ENCODE measurements at regions of chr5 and their contacts with region 1.

Region 1: DNA sequence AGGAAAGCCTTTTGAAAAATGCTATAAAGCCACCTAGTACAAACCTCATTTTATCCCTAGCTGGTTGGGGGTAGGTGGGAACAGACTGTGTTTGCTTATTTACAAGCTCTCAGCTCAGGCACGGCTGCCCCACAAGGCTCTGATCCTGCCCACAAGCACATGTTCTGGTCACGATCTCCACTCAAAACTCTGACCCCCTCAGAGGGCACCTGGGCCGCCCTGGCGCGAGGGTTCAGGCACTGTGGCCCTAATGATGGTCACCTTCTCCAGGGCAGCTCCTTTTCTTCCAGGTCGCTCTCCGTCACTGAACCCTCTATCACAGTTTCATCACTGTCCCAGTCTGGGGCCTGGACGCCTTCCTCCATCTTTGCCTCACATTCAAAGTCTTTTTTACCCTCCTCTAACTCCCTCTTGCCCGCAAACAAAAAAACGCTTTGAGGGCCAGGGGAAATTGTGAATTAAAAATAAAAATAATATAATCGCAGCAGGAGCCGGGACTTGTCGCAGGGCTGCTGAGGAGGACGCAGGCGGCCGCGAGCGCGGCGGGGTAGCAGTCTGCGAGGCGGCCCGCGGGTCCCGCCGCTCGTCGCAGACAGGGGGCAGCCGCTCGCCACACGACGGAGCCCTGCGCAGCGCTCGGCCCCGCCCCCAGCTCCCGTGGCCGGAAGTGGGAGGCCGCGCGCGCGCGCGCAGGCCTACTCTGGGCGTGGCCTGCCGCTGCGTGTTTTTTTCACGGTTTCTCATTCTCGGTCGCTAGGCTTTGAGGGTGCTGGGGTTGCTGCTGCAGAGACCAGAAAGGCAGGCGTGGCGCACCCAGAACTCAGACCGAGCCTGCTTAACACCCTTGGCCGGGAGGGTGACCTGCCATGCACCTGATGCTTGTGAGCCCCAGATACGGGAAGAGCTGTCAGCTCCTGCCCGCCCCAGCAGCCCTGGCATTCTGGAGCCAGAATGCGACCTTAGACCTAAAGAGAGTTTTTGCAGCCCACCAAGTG is at the start of gene ANKRD31:
- DNase-seq: peak; percentile 80 to 97 (median 90)
- ATAC-seq: peak; percentile 98
- H3K4me3 ChIP-seq: peak within 1 kb of the TSS; percentile 76
- H3K4me3 Mint-ChIP-seq: peak within 1 kb of the TSS; percentile 96
- H3K27ac ChIP-seq: peak within 1 kb of the TSS; percentile 58 to 79
- H3K27ac Mint-ChIP-seq: peak within 1 kb of the TSS; percentile 94
- H3K4me1 ChIP-seq: peaks cover 13% of the 10 kb centered on the region
- H3K4me1 Mint-ChIP-seq: peaks cover 19% of the 10 kb centered on the region
- H3K27me3 ChIP-seq: no peaks in the 10 kb centered on the region
- H3K27me3 Mint-ChIP-seq: no peaks in the 10 kb centered on the region
- CTCF ChIP-seq: peak; percentile 80
- total RNA-seq, gene ANKRD31: 0.55 to 0.56 TPM

Region 2: DNA sequence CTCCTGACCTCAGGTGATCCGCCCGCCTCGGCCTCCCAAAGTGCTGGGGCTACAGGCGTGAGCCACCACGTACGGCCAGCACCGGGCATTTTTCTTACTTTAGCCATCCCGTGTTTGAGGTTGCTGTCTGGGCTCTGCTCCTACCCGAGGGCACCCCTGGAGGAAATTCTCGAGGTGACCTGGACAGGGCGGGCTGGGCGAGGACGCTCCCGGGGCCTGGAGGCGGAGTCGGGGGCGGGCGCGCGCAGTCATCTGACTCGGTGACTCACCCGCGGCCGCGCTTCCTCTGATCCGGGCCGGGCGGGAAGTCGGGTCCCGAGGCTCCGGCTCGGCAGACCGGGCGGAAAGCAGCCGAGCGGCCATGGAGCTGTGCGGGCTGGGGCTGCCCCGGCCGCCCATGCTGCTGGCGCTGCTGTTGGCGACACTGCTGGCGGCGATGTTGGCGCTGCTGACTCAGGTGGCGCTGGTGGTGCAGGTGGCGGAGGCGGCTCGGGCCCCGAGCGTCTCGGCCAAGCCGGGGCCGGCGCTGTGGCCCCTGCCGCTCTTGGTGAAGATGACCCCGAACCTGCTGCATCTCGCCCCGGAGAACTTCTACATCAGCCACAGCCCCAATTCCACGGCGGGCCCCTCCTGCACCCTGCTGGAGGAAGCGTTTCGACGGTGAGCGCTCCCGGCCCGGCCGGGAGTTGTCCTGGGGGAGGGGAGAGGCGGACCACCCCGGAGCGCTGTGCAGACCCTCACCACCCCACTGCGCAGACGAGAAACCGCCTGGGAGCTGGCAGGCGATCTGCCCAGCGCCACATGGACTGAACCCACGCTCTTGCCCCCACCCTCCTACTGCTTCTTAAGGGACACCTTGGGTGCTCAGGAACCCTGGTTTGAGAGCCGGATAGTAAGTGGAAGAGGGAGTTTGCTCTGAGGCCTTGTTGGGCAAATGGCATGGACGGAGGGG is 551.4 kb before region 1 on chr5 and contains the start of gene HEXB:
- CTCF ChIA-PET with region 1: no interaction called
- POLR2A ChIA-PET with region 1: no interaction called
- intact Hi-C with region 1: loop called in 1 of 2 experiments (anchors 10 kb)
- DNase-seq: peak; percentile 61 to 92 (median 82)
- ATAC-seq: peak; percentile 88
- H3K4me3 ChIP-seq: peak within 1 kb of the TSS; percentile 99
- H3K4me3 Mint-ChIP-seq: peak within 1 kb of the TSS; percentile 92
- H3K27ac ChIP-seq: peak within 1 kb of the TSS; percentile 52 to 63
- H3K27ac Mint-ChIP-seq: peak within 1 kb of the TSS; percentile 72
- H3K4me1 ChIP-seq: peaks cover 27% of the 10 kb centered on the region
- H3K4me1 Mint-ChIP-seq: peaks cover 22% of the 10 kb centered on the region
- H3K27me3 ChIP-seq: no peaks in the 10 kb centered on the region
- H3K27me3 Mint-ChIP-seq: no peaks in the 10 kb centered on the region
- CTCF ChIP-seq: no peak
- total RNA-seq, gene HEXB: 31.9 to 33.8 TPM

Region 3: GRCh38 chr5:75059912-75060545 is 176.6 kb before region 1 on chr5:
- CTCF ChIA-PET with region 1: interaction called, 10 read pairs
- POLR2A ChIA-PET with region 1: interaction called, 182 read pairs
- intact Hi-C with region 1: no loop called
- DNase-seq: peak in 13 of 14 experiments; percentile 24 to 88 (median 43)
- ATAC-seq: peak; percentile 92
- H3K4me3 ChIP-seq: no peak overlapping the region
- H3K4me3 Mint-ChIP-seq: peak overlapping the region; percentile 70
- H3K27ac ChIP-seq: peak overlapping the region; percentile 59 to 81
- H3K27ac Mint-ChIP-seq: peak overlapping the region; percentile 94
- H3K4me1 ChIP-seq: peaks cover 69% of the 10 kb centered on the region
- H3K4me1 Mint-ChIP-seq: peaks cover 73% of the 10 kb centered on the region
- H3K27me3 ChIP-seq: no peaks in the 10 kb centered on the region
- H3K27me3 Mint-ChIP-seq: no peaks in the 10 kb centered on the region
- CTCF ChIP-seq: no peak

Region 4: GRCh38 chr5:75192804-75193203 is 43.8 kb before region 1 on chr5:
- CTCF ChIA-PET with region 1: no interaction called
- POLR2A ChIA-PET with region 1: no interaction called
- intact Hi-C with region 1: no loop called
- DNase-seq: no peak
- ATAC-seq: no peak
- H3K4me3 ChIP-seq: no peak overlapping the region
- H3K4me3 Mint-ChIP-seq: no peak overlapping the region
- H3K27ac ChIP-seq: no peak overlapping the region
- H3K27ac Mint-ChIP-seq: no peak overlapping the region
- H3K4me1 ChIP-seq: no peaks in the 10 kb centered on the region
- H3K4me1 Mint-ChIP-seq: no peaks in the 10 kb centered on the region
- H3K27me3 ChIP-seq: no peaks in the 10 kb centered on the region
- H3K27me3 Mint-ChIP-seq: no peaks in the 10 kb centered on the region
- CTCF ChIP-seq: no peak

Region 5: GRCh38 chr5:75277463-75277862 is 40.8 kb after region 1 on chr5:
- CTCF ChIA-PET with region 1: no interaction called
- POLR2A ChIA-PET with region 1: no interaction called
- intact Hi-C with region 1: no loop called
- DNase-seq: no peak
- ATAC-seq: no peak
- H3K4me3 ChIP-seq: no peak overlapping the region
- H3K4me3 Mint-ChIP-seq: no peak overlapping the region
- H3K27ac ChIP-seq: no peak overlapping the region
- H3K27ac Mint-ChIP-seq: no peak overlapping the region
- H3K4me1 ChIP-seq: no peaks in the 10 kb centered on the region
- H3K4me1 Mint-ChIP-seq: peaks cover 4% of the 10 kb centered on the region
- H3K27me3 ChIP-seq: no peaks in the 10 kb centered on the region
- H3K27me3 Mint-ChIP-seq: no peaks in the 10 kb centered on the region
- CTCF ChIP-seq: no peak

Region 6: DNA sequence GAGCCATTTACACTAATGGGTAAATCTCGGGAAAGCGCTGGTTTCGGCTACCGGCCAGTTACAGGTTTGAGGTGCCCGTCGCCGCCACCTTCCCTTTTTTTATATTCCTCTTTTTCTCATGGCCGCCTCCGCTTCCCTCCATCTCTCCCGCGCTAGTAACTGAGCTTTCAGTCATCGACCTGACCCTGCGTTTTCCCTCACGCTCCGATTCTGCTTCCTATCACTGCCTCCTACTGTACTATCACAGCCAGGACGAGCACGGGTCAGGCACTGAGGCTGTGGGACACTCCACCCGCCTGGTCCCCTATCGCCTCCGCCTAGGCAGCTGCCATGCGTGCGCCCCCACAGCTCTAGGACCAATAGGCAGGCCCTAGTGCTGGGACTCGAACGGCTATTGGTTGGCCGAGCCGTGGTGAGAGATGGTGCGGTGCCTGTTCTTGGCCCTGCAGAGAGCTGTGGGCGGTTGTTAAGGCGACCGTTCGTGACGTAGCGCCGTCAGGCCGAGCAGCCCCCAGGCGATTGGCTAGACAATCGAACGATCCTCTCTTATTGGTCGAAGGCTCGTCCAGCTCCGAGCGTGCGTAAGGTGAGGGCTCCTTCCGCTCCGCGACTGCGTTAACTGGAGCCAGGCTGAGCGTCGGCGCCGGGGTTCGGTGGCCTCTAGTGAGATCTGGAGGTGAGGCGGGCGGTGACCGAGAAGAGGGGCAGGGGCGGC is 100.2 kb after region 1 on chr5 and contains the start of gene HMGCR:
- CTCF ChIA-PET with region 1: interaction called, 14 read pairs
- POLR2A ChIA-PET with region 1: interaction called, 29 read pairs
- intact Hi-C with region 1: loop called (anchors 1 to 5 kb)
- DNase-seq: peak; percentile 91 to 99 (median 95)
- ATAC-seq: peak; percentile 90
- H3K4me3 ChIP-seq: peak within 1 kb of the TSS; percentile 82
- H3K4me3 Mint-ChIP-seq: no peak within 1 kb of the TSS
- H3K27ac ChIP-seq: peak within 1 kb of the TSS; percentile 64 to 88
- H3K27ac Mint-ChIP-seq: no peak within 1 kb of the TSS
- H3K4me1 ChIP-seq: peaks cover 5% of the 10 kb centered on the region
- H3K4me1 Mint-ChIP-seq: peaks cover 38% of the 10 kb centered on the region
- H3K27me3 ChIP-seq: no peaks in the 10 kb centered on the region
- H3K27me3 Mint-ChIP-seq: no peaks in the 10 kb centered on the region
- CTCF ChIP-seq: no peak
- total RNA-seq, gene HMGCR: 55.5 to 61.5 TPM

Region 7: GRCh38 chr5:75446068-75446467 is 209.4 kb after region 1 on chr5:
- CTCF ChIA-PET with region 1: no interaction called
- POLR2A ChIA-PET with region 1: no interaction called
- intact Hi-C with region 1: no loop called
- DNase-seq: no peak
- ATAC-seq: no peak
- H3K4me3 ChIP-seq: no peak overlapping the region
- H3K4me3 Mint-ChIP-seq: no peak overlapping the region
- H3K27ac ChIP-seq: no peak overlapping the region
- H3K27ac Mint-ChIP-seq: no peak overlapping the region
- H3K4me1 ChIP-seq: no peaks in the 10 kb centered on the region
- H3K4me1 Mint-ChIP-seq: peaks cover 15% of the 10 kb centered on the region
- H3K27me3 ChIP-seq: no peaks in the 10 kb centered on the region
- H3K27me3 Mint-ChIP-seq: no peaks in the 10 kb centered on the region
- CTCF ChIP-seq: no peak

Region 8: DNA sequence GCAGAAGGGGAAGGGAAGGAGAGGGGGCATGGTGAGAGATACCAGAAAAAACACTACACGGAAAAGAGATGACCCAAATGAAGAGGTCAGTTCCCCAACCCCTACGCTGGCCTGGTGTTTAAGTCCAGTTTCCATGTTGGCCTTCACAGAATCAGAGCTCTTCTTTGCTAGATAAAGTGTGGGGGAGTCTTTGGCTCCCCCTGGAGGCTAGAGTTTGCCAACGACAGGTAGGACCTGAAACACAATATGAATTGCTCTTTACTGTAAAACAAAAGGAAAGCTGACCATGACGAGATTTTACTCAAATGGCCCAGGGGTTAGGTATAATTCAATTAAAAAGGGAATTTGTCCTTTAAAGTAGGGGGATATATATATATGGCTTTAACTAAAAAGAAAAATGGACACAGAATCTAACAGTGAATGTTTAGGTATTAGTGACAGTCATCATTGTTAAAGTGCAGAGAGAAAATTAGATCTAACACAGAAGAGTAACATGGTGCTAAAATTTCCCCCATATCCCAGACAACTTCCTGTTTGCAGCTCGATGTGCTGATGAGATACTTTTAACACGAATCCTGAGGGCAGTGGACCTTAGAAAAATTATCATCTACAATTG is 938.5 kb after region 1 on chr5:
- CTCF ChIA-PET with region 1: interaction called, 5 read pairs
- POLR2A ChIA-PET with region 1: no interaction called
- intact Hi-C with region 1: loop called in 1 of 2 experiments (anchors 10 kb)
- DNase-seq: peak; percentile 24 to 74 (median 40)
- ATAC-seq: peak; percentile 64
- H3K4me3 ChIP-seq: no peak overlapping the region
- H3K4me3 Mint-ChIP-seq: peak overlapping the region; percentile 73
- H3K27ac ChIP-seq: peak overlapping the region in 1 of 2 donors; percentile 35
- H3K27ac Mint-ChIP-seq: no peak overlapping the region
- H3K4me1 ChIP-seq: peaks cover 14% of the 10 kb centered on the region
- H3K4me1 Mint-ChIP-seq: peaks cover 21% of the 10 kb centered on the region
- H3K27me3 ChIP-seq: no peaks in the 10 kb centered on the region
- H3K27me3 Mint-ChIP-seq: no peaks in the 10 kb centered on the region
- CTCF ChIP-seq: peak; percentile 79

Measured in CD4-positive, alpha-beta T cell (primary cell).